Activated CD4-positive, alpha-beta T cell treated with anti-CD3 and anti-CD28 coated beads, Interleukin-2, amount 10 ng/mL, durations not matched to agents 24 days and 14 days (primary cell): ENCODE measurements at regions of chr3 and their contacts with region 1.

Region 1: GRCh38 chr3:184561061-184561912 is at the start of gene EPHB3:
- DNase-seq: peak; percentile 96
- H3K4me3 Mint-ChIP-seq: peak within 1 kb of the TSS; percentile 77
- H3K27ac Mint-ChIP-seq: peak within 1 kb of the TSS; percentile 10
- H3K4me1 Mint-ChIP-seq: peaks cover 21% of the 10 kb centered on the region
- H3K27me3 Mint-ChIP-seq: peaks cover 55% of the 10 kb centered on the region
- total RNA-seq, gene EPHB3: 0.05 TPM in 1 of 2 replicates, not detected in the other

Region 2: GRCh38 chr3:184362668-184363540 is 198.4 kb before region 1 on chr3:
- intact Hi-C with region 1: no loop called
- DNase-seq: peak; percentile 99
- H3K4me3 Mint-ChIP-seq: peak overlapping the region; percentile 98
- H3K27ac Mint-ChIP-seq: peak overlapping the region; percentile 99
- H3K4me1 Mint-ChIP-seq: peaks cover 26% of the 10 kb centered on the region
- H3K27me3 Mint-ChIP-seq: peaks cover 8% of the 10 kb centered on the region

Region 3: DNA sequence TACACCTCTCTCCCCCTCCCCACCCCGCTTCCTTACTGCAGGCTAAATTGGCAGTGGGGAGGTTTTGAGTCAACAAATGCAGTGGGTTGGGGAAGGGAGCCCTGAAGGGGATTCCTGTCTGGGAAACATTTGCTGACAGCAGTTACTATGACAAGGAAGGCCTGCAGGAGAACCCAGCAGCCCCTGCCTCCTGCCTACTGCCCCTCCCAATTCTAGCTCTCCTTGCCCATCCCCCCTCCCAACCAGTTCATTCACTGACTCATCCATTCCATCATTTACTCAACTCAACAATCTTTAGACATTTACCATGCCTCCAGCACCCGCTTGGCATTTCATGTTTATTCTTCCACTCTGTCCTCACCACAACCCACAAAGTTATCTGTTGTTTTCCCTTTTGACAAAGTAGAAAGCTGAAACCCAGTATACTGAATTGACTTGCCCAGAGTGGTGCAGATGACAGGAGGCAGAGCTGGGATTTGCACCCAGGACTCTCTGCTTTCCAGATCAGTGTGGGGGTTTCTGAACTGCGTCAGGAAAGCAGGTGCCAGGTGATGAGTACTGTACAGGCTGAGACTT is 75.5 kb after region 1 on chr3:
- intact Hi-C with region 1: loop called (anchors 1 kb)
- DNase-seq: peak; percentile 79
- H3K4me3 Mint-ChIP-seq: no peak overlapping the region
- H3K27ac Mint-ChIP-seq: no peak overlapping the region
- H3K4me1 Mint-ChIP-seq: peaks cover 5% of the 10 kb centered on the region
- H3K27me3 Mint-ChIP-seq: peaks cover 2% of the 10 kb centered on the region

Region 4: GRCh38 chr3:184727357-184728009 is 166.2 kb after region 1 on chr3:
- intact Hi-C with region 1: loop called (anchors 1 kb)
- DNase-seq: peak; percentile 82
- H3K4me3 Mint-ChIP-seq: no peak overlapping the region
- H3K27ac Mint-ChIP-seq: no peak overlapping the region
- H3K4me1 Mint-ChIP-seq: no peaks in the 10 kb centered on the region
- H3K27me3 Mint-ChIP-seq: peaks cover 36% of the 10 kb centered on the region

Region 5: GRCh38 chr3:184777336-184778004 is 216.2 kb after region 1 on chr3:
- intact Hi-C with region 1: loop called (anchors 1 kb)
- DNase-seq: peak; percentile 93
- H3K4me3 Mint-ChIP-seq: no peak overlapping the region
- H3K27ac Mint-ChIP-seq: no peak overlapping the region
- H3K4me1 Mint-ChIP-seq: no peaks in the 10 kb centered on the region
- H3K27me3 Mint-ChIP-seq: peaks cover 17% of the 10 kb centered on the region